ENCODE measurements at regions of chr22 and their contacts with region 1.

Region 1: GRCh38 chr22:20456064-20456721 is 18.6 kb upstream of the SCARF2 start:
- DNase-seq: peak; percentile 84
- ATAC-seq: peak; percentile 100
- H3K4me3 ChIP-seq: no peak overlapping the region
- H3K4me3 Mint-ChIP-seq: no peak overlapping the region
- H3K27ac ChIP-seq: no peak overlapping the region
- H3K27ac Mint-ChIP-seq: peak overlapping the region; percentile 59
- H3K4me1 ChIP-seq: peaks cover 10% of the 10 kb centered on the region in 2 donors
- H3K4me1 Mint-ChIP-seq: peaks cover 22% of the 10 kb centered on the region
- H3K27me3 ChIP-seq: no peaks in the 10 kb centered on the region
- H3K27me3 Mint-ChIP-seq: no peaks in the 10 kb centered on the region
- CTCF ChIP-seq: peak; percentile 85

Region 2: GRCh38 chr22:20430720-20431510 is 25.3 kb before region 1 on chr22:
- CTCF ChIA-PET with region 1: interaction called, 18 read pairs
- POLR2A ChIA-PET with region 1: no interaction called
- intact Hi-C with region 1: loop called (anchors 1 kb)
- DNase-seq: peak; percentile 78
- ATAC-seq: peak; percentile 56
- H3K4me3 ChIP-seq: peak overlapping the region in 4 of 5 experiments; percentile 47 to 80 (median 67)
- H3K4me3 Mint-ChIP-seq: peak overlapping the region; percentile 90
- H3K27ac ChIP-seq: no peak overlapping the region
- H3K27ac Mint-ChIP-seq: no peak overlapping the region
- H3K4me1 ChIP-seq: peaks cover 36 to 49% of the 10 kb centered on the region in 2 donors
- H3K4me1 Mint-ChIP-seq: peaks cover 32% of the 10 kb centered on the region
- H3K27me3 ChIP-seq: peaks cover 0 to 90% (median 41%) of the 10 kb centered on the region in 4 experiments
- H3K27me3 Mint-ChIP-seq: peaks cover 62% of the 10 kb centered on the region
- CTCF ChIP-seq: peak; percentile 39

Region 3: DNA sequence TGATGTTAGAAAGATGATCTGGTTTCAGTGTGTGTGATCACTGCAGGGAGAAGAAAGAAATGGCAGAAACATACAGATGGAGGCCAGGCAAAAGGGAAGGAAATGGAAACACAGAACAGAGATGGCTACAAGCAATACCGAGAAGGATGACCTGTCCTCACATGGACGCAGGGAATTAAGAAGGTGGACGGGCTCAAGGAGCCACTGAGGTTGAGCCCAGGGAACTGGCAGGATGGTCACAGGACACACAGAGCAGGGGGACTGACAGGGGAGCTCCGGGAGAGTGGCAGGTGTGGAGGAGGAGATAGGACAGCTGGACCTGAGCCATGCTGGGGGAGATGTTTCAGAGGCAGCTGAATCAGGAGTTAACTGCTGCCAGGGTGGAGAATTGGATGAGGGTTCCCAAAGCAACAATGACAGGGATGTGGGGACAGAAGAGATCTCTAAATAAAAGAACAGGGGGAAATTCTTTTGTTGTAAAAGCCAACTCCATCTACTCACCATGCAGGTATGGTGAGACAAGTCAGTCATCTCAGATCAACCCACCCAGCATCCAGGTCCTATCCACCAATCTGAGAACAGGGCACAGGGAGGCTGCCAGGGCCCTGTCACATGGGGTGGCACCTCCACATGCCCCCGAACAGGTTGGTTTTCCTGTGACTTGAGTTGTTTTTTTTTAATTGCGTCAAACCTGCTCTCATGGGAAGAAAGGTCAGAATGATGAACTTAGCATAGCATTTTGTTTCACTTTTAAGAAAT is 13.1 kb after region 1 on chr22:
- CTCF ChIA-PET with region 1: interaction called, 13 read pairs
- POLR2A ChIA-PET with region 1: no interaction called
- intact Hi-C with region 1: no loop called
- DNase-seq: no peak
- ATAC-seq: no peak
- H3K4me3 ChIP-seq: no peak overlapping the region
- H3K4me3 Mint-ChIP-seq: no peak overlapping the region
- H3K27ac ChIP-seq: no peak overlapping the region
- H3K27ac Mint-ChIP-seq: peak overlapping the region; percentile 34
- H3K4me1 ChIP-seq: peaks cover 15% of the 10 kb centered on the region in 2 donors
- H3K4me1 Mint-ChIP-seq: peaks cover 25% of the 10 kb centered on the region
- H3K27me3 ChIP-seq: no peaks in the 10 kb centered on the region
- H3K27me3 Mint-ChIP-seq: no peaks in the 10 kb centered on the region
- CTCF ChIP-seq: no peak